CD4-positive, alpha-beta T cell (primary cell): ENCODE measurements at regions of chr17 and their contacts with region 1.

Region 1: GRCh38 chr17:76063875-76064546 is 8.3 kb downstream of the SRP68 start:
- DNase-seq: peak in 11 of 14 experiments; percentile 25 to 74 (median 42)
- ATAC-seq: peak; percentile 97
- H3K4me3 ChIP-seq: peak overlapping the region; percentile 6
- H3K4me3 Mint-ChIP-seq: peak overlapping the region; percentile 72
- H3K27ac ChIP-seq: peak overlapping the region; percentile 18 to 68
- H3K27ac Mint-ChIP-seq: peak overlapping the region; percentile 88
- H3K4me1 ChIP-seq: peaks cover 16% of the 10 kb centered on the region
- H3K4me1 Mint-ChIP-seq: peaks cover 25% of the 10 kb centered on the region
- H3K27me3 ChIP-seq: no peaks in the 10 kb centered on the region
- H3K27me3 Mint-ChIP-seq: no peaks in the 10 kb centered on the region
- CTCF ChIP-seq: no peak

Region 2: GRCh38 chr17:76027159-76027839 is 36.7 kb before region 1 on chr17 and contains the start of gene EVPL:
- CTCF ChIA-PET with region 1: no interaction called
- POLR2A ChIA-PET with region 1: interaction called, 10 read pairs
- intact Hi-C with region 1: no loop called
- DNase-seq: no peak
- ATAC-seq: no peak
- H3K4me3 ChIP-seq: no peak within 1 kb of the TSS
- H3K4me3 Mint-ChIP-seq: no peak within 1 kb of the TSS
- H3K27ac ChIP-seq: no peak within 1 kb of the TSS
- H3K27ac Mint-ChIP-seq: peak within 1 kb of the TSS; percentile 17
- H3K4me1 ChIP-seq: peaks cover 25% of the 10 kb centered on the region
- H3K4me1 Mint-ChIP-seq: peaks cover 16% of the 10 kb centered on the region
- H3K27me3 ChIP-seq: no peaks in the 10 kb centered on the region
- H3K27me3 Mint-ChIP-seq: no peaks in the 10 kb centered on the region
- CTCF ChIP-seq: no peak
- total RNA-seq, gene EVPL: 0.14 to 0.38 TPM

Region 3: DNA sequence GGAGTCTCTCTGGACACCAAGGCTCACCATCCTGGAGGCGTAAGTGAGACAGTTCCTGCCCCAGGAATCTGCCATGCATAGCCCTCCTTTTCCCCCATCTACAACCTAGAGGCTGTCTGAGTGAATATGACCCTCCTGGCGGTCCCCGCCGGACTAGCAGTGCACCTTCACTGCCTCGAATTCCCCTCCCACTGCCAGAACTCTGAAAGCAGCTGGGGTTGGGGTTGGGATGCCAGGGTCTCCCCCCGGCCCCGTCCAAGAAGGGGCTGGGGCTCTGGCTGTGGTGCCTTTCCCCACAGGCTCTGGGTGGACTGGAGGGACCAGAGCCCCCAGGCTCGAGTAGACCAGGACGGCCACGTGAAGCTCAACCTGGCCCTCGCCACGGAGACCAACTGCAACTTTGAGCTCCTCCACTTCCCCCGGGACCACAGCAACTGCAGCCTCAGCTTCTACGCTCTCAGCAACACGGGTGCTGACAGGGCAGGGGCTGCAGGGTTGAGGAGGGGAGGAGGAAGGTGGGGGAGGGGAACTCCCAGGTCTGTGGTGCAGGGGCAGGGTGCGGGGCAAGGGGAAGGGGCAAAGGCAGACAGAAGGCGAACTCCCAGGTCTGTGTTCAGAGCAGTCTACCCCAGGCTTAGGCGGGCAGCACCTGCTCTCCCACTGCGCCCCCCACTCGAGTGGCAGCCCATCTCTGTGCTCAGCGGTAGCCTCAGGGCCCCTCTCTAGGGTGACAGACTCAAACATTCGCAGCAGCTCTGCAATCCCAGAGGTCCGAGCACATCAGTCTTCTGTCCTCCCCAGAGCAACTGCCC is 16.2 kb after region 1 on chr17:
- CTCF ChIA-PET with region 1: interaction called, 3 read pairs
- POLR2A ChIA-PET with region 1: interaction called, 13 read pairs
- intact Hi-C with region 1: no loop called
- DNase-seq: peak in 2 of 14 experiments; percentile 21 to 38
- ATAC-seq: peak; percentile 35
- H3K4me3 ChIP-seq: no peak overlapping the region
- H3K4me3 Mint-ChIP-seq: no peak overlapping the region
- H3K27ac ChIP-seq: no peak overlapping the region
- H3K27ac Mint-ChIP-seq: peak overlapping the region; percentile 58
- H3K4me1 ChIP-seq: peaks cover 49% of the 10 kb centered on the region
- H3K4me1 Mint-ChIP-seq: peaks cover 42% of the 10 kb centered on the region
- H3K27me3 ChIP-seq: peaks cover 17 to 20% of the 10 kb centered on the region in 2 experiments
- H3K27me3 Mint-ChIP-seq: peaks cover 27% of the 10 kb centered on the region
- CTCF ChIP-seq: no peak